HEK293 (cell line): ENCODE measurements at regions of chr5 and their contacts with region 1.

Region 1: DNA sequence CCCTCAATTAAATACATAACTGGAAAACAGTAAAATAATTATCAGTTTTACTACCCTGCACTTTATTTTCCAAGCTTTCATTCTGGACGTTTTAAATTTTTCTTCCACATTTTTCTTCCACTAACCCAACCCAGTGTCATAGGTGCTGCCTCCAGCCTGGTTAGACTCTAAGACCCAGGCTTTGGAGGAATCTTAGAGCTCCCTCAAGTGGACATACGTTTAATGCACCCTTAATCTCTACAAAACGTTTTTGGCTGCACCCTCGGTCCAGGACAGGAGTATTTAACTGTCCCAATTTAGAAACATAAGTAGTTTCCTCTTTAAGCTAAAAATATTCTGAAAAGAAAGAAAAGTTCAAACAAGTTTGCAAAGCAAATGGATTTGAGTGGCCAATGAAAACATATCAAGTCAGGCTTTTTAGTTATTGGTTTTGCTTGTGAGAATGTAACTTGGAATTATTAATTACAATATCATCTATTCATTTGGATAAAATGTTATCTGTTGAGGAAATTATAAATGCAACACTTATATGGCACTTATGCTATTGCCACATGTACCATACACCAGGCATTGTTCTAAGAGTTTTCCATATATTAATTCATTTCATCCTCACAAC is 38.9 kb downstream of the CDH6 start:
- H3K4me3 ChIP-seq: no peak overlapping the region
- H3K27ac ChIP-seq: no peak overlapping the region
- H3K4me1 ChIP-seq: no peaks in the 10 kb centered on the region
- CTCF ChIP-seq: no peak

Region 2: DNA sequence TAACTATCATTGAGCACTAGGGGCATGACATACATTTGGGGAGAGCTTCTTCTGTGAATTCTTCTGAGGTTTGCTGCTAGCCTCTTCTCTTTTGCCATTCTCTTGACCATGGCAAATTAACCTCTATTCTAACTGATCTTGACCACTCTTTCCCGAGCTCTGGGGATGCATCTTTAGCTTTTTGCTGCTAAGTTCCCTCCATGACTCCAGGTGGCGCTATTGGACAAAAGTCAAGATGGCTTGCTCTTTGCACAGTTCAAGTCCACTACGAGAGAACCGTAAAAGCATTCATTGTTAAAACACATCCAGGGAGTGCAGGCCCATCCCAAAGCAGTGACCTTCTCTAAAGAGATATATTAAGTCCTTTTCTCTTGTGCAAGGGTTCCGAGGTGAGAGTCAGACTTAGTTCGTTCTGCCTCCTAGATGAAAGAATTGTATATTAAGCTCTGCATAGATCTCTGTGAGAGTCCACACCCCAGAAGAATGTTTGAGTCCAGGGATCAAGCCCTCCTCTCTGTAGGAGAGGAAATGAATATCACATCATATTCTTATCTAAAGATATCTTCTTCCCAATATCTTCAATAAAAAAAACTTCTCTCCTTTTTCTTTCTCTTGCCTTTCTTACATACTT is 1191.8 kb before region 1 on chr5:
- CTCF ChIA-PET with region 1: interaction called, 24 read pairs
- POLR2A ChIA-PET with region 1: no interaction called
- H3K4me3 ChIP-seq: no peak overlapping the region
- H3K27ac ChIP-seq: no peak overlapping the region
- H3K4me1 ChIP-seq: no peaks in the 10 kb centered on the region
- CTCF ChIP-seq: peak; percentile 59; the same call in 1 of the 2 replicates

Region 3: DNA sequence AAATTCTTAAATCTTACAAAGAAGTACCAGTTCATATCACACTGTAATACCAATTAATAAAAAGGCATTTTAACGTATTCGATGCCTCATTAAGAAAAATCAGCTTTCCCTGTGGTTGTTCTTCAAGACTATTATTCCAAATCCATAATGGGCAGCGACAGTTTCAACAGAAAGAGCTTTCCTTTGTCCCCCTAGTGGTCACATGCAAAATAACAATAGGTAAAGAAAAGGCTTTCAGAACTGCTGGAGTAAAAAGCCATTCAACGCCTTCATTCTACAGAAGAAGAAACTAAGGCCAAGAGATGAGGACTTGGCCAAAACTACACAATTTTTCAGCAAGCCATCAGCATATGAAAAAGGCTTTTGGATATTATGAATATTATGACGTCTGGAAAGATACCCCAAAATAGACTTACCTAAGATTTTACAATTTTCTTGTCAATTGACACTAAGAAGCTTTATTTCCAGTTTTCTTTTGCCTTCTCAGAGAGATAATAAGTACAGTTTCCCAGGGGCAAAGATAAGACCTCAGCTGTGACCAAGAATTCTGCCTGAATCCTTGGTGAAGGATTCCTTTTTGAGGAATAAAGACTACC is 45.6 kb before region 1 on chr5:
- CTCF ChIA-PET with region 1: interaction called, 12 read pairs
- POLR2A ChIA-PET with region 1: no interaction called
- H3K4me3 ChIP-seq: no peak overlapping the region
- H3K27ac ChIP-seq: no peak overlapping the region
- H3K4me1 ChIP-seq: no peaks in the 10 kb centered on the region
- CTCF ChIP-seq: no peak

Region 4: GRCh38 chr5:31221001-31221400 is 11.4 kb before region 1 on chr5:
- CTCF ChIA-PET with region 1: interaction called, 60 read pairs
- POLR2A ChIA-PET with region 1: no interaction called
- H3K4me3 ChIP-seq: no peak overlapping the region
- H3K27ac ChIP-seq: no peak overlapping the region
- H3K4me1 ChIP-seq: no peaks in the 10 kb centered on the region
- CTCF ChIP-seq: no peak

Region 5: DNA sequence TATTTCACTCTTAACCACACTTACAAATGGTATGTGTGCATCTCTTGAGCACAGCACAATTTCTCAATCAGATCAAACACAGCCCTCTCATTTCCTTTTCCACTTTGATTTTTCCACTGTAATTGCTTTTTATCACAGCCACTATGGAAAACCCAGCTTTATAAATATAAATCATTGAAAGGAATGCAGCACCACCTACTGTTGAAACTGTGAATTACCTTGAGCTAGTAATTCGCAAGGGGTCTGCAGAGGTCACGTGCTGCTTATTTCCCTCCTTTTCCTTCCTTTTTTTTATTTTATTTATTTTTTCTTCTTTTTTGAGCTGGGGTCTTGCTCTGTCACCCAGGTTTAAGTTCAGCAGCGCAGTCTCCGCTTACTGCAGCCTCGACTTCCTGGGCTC is 38.0 kb after region 1 on chr5:
- CTCF ChIA-PET with region 1: interaction called, 29 read pairs
- POLR2A ChIA-PET with region 1: no interaction called
- H3K4me3 ChIP-seq: no peak overlapping the region
- H3K27ac ChIP-seq: no peak overlapping the region
- H3K4me1 ChIP-seq: no peaks in the 10 kb centered on the region
- CTCF ChIP-seq: peak; percentile 31; the same call in 1 of the 2 replicates